ENCODE measurements at regions of chr22 and their contacts with region 1.

Region 1: DNA sequence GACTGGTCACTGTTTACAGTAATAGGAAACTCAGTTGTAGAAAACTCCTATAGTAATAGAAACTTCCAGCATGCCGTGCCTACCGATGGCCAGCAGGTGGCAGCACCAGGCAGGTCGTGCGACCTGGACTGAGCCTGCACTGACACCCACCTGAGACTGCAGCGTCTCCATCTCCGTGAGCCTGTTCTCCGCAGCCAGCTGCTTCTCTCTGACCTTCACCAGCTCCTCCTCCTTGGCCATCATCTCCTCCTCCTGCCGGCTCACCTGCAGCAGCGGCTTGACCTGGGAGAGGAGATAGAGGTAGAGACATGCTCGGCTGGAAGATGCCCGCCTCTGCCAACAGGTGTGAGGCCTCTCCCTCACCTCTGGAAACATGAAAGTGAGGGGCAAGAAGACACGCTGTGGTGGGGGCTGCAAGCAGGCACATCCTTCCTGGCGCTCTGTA is 48.5 kb downstream of the APOL1 start:
- DNase-seq: peak; percentile 28 to 70
- ATAC-seq: peak; percentile 64 to 76; a peak in 5 of 6 replicates
- H3K4me3 ChIP-seq: no peak overlapping the region
- H3K27ac ChIP-seq: peak overlapping the region in 1 of 2 experiments; percentile 40; a peak in 1 of 6 replicates
- H3K4me1 ChIP-seq: peaks cover 27% of the 10 kb centered on the region; the same call in 2 of the 3 replicates
- CTCF ChIP-seq: peak; percentile 68
- EP300 ChIP-seq: no peak
- POLR2A ChIP-seq: no peak
- RAD21 ChIP-seq: peak; percentile 73 to 75

Region 2: GRCh38 chr22:36208177-36208755 is 93.1 kb before region 1 on chr22:
- CTCF ChIA-PET with region 1: no interaction called
- POLR2A ChIA-PET with region 1: no interaction called
- DNase-seq: no peak
- ATAC-seq: no peak
- H3K4me3 ChIP-seq: no peak overlapping the region
- H3K27ac ChIP-seq: no peak overlapping the region
- H3K4me1 ChIP-seq: no peaks in the 10 kb centered on the region
- CTCF ChIP-seq: no peak
- EP300 ChIP-seq: no peak
- POLR2A ChIP-seq: no peak
- RAD21 ChIP-seq: no peak

Region 3: GRCh38 chr22:36286471-36287224 is 14.8 kb before region 1 on chr22:
- CTCF ChIA-PET with region 1: interaction called, 86 read pairs
- POLR2A ChIA-PET with region 1: no interaction called
- DNase-seq: peak; percentile 68 to 71
- ATAC-seq: peak; percentile 81 to 90
- H3K4me3 ChIP-seq: no peak overlapping the region
- H3K27ac ChIP-seq: no peak overlapping the region
- H3K4me1 ChIP-seq: no peaks in the 10 kb centered on the region
- CTCF ChIP-seq: peak; percentile 65
- EP300 ChIP-seq: no peak
- POLR2A ChIP-seq: no peak
- RAD21 ChIP-seq: peak; percentile 50 to 62

Region 4: GRCh38 chr22:36317658-36318271 is 16.4 kb after region 1 on chr22:
- CTCF ChIA-PET with region 1: interaction called, 54 read pairs
- POLR2A ChIA-PET with region 1: no interaction called
- DNase-seq: no peak
- ATAC-seq: 0 out of 6 replicates have a peak, but pooled peaks of 1 of the 2 experiments have one; percentile 11
- H3K4me3 ChIP-seq: no peak overlapping the region
- H3K27ac ChIP-seq: no peak overlapping the region
- H3K4me1 ChIP-seq: no peaks in the 10 kb centered on the region
- CTCF ChIP-seq: no peak
- EP300 ChIP-seq: no peak
- POLR2A ChIP-seq: no peak
- RAD21 ChIP-seq: no peak

Region 5: DNA sequence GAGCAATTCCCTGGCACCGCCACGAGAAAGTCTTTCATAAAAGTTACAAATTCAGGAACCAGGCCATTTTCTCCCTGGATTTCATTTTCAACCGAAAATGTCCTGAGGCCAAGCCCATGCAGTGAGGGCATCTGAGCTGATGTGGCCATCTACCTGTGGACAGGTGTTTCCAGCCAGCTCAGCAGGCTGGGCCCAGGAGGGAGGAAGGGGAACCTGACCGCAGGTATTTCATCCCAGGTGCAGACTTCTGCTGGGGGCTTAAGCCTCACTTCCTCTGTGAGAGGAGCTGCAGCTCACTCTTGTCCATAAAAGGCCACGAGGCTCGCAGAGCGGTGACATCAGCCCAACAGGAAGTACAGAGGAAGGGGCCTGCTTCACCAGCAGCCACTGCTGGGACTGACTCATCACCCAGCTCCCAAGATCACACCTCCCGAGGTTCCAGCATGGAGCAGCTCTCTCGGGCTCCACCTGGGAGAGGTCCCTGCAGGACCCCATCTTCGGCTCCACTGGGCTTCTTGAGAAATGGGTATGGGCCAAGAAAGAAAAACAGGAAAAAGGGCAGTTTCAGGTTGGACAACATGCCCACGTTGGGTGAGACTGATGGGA is 30.0 kb after region 1 on chr22:
- CTCF ChIA-PET with region 1: interaction called, 24 read pairs
- POLR2A ChIA-PET with region 1: no interaction called
- DNase-seq: peak; percentile 67 to 88
- ATAC-seq: peak; percentile 38 to 62; a peak in 5 of 6 replicates
- H3K4me3 ChIP-seq: no peak overlapping the region
- H3K27ac ChIP-seq: peak overlapping the region; percentile 96 to 99
- H3K4me1 ChIP-seq: peaks cover 99% of the 10 kb centered on the region
- CTCF ChIP-seq: no peak
- EP300 ChIP-seq: 0 out of 5 replicates have a peak, but pooled peaks of 1 of the 2 experiments have one; percentile 15
- POLR2A ChIP-seq: no peak
- RAD21 ChIP-seq: no peak

Region 6: DNA sequence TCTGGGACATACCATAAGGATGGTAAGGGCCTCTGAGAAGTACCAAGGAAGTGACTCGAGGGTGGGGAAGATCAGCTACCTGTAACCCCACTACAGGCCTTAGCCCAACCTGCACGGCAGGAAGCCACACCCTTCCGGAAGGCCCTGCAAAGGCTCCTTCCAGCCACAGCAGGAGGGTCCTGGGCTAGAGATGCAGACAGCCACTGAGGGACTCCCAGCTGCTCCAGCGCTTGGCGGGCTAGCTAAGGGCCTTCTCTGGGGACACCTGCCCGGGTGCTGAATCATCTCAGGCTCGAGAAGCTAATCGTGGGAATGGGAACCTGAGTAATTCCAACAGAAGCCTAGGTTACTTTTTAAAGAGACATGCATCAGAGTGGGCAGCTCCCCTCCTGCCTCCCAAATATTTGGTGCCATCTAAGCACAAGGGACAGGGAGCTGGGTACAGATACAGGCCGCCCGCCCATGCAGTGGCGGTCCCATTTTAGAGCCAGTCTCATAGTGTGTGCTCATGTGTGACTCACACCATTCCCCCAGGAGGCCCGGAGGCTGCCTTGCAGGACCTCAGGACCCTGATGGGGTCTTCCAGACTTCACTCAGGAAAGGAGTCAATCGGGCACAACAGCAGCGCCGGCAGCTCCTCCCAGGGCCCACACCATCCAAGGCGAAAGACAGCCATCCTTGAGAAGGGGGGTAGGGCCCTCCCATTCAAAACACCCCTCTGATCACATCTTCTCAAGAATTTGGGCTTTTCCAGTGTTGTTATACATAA is 78.4 kb after region 1 on chr22:
- CTCF ChIA-PET with region 1: interaction called, 13 read pairs
- POLR2A ChIA-PET with region 1: no interaction called
- DNase-seq: no peak
- ATAC-seq: peak; percentile 24 to 38; a peak in 4 of 6 replicates
- H3K4me3 ChIP-seq: no peak overlapping the region
- H3K27ac ChIP-seq: peak overlapping the region in 1 of 2 experiments; percentile 74; a peak in 3 of 6 replicates
- H3K4me1 ChIP-seq: peaks cover 67% of the 10 kb centered on the region
- CTCF ChIP-seq: no peak
- EP300 ChIP-seq: no peak
- POLR2A ChIP-seq: no peak
- RAD21 ChIP-seq: no peak

Region 7: DNA sequence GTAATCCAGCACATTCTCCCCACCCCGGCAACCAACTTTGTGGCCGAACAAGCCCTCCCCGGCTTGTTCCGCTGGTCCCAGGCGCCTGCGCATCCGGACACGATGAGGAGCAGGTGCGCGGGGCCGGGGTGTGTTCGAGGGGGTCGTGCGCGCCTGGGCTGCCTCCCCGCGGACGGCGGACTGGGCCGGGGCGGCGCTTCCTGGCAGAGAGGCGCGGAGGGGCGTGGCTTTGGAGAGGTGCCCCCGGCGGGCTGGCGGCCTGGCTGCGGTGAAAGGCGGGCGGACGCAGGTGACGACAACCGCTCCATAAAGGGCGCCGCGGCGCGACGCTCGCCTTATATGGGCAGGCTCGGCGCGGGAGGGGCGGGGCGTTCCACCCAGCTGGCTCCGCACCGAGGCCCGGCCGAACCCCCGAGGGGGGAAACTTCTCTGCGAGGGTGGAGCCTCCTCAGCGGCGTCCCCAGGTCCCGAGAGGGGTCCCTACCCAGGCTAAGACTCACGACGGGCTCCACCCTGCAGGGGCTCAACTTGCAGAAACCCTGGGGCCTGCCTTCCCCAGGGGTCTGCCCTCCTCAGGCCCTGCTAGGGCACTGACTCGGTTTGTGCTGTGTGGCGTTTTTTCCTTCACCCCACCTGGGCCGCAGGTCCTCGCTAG is 153.6 kb after region 1 on chr22:
- CTCF ChIA-PET with region 1: interaction called, 15 read pairs
- POLR2A ChIA-PET with region 1: no interaction called
- DNase-seq: peak; percentile 73 to 94
- ATAC-seq: peak; percentile 88
- H3K4me3 ChIP-seq: peak overlapping the region; percentile 47
- H3K27ac ChIP-seq: peak overlapping the region; percentile 95 to 98
- H3K4me1 ChIP-seq: peaks cover 48% of the 10 kb centered on the region
- CTCF ChIP-seq: peak; percentile 16; the same call in 1 of the 3 replicates
- EP300 ChIP-seq: no peak
- POLR2A ChIP-seq: peak; percentile 38
- RAD21 ChIP-seq: peak in 1 of 2 experiments; percentile 52; a peak in 2 of 5 replicates